GM23248 (cell line): ENCODE measurements at regions of chr1 and their contacts with region 1.

Region 1: DNA sequence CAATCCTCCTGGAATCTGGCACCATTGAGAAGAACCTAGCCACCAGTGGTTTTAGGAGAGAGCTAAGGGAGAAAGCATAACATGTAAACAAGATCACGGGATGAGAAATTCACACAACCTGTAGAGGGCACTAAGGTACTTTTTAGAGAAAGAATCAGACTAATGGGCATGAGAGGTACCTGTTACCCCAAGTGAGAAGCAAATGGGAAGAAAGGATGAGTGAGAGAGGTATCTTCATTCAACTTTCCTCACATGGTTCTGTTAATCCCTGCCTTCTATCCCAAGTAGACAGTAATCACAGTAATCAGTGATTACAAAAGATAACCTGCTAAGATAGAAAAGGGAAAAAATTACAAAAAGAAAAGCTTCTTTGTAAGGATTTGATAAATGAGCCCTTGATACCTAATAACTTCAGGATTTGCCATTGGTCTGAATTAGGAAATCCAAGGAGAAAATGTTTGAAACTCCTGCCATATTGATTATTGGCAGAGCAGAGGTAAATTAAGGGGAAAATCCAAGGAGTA is 251.1 kb upstream of the ADGRL2 start:
- DNase-seq: peak; percentile 67
- H3K4me3 ChIP-seq: no peak overlapping the region
- H3K27ac ChIP-seq: no peak overlapping the region
- H3K4me1 ChIP-seq: no peaks in the 10 kb centered on the region
- H3K27me3 ChIP-seq: no peaks in the 10 kb centered on the region

Region 2: DNA sequence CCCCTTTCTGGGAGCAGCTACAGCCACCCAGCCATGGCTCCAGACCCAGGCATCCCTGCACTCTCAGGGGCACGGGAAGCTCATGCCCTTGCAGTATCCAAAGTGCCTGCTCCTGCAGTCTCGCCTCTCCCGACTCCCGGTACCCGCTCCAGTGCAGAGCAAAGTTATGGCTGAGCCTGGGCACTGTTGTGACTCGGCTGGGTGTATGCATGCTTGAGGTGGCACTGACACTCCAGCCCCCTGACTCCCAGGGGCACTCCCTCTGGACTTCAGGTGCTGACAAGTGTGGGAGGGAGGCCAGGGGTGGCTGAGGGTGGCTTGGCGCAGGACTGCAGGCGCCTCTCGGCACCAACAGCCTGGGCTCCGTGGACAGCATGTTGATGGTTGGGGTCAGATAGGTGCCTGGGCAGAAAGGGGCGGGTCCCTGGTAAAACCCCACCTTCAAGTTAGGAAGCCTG is 329.0 kb before region 1 on chr1:
- in situ Hi-C with region 1: no loop called
- DNase-seq: no peak
- H3K4me3 ChIP-seq: no peak overlapping the region
- H3K27ac ChIP-seq: no peak overlapping the region
- H3K4me1 ChIP-seq: no peaks in the 10 kb centered on the region
- H3K27me3 ChIP-seq: no peaks in the 10 kb centered on the region

Region 3: DNA sequence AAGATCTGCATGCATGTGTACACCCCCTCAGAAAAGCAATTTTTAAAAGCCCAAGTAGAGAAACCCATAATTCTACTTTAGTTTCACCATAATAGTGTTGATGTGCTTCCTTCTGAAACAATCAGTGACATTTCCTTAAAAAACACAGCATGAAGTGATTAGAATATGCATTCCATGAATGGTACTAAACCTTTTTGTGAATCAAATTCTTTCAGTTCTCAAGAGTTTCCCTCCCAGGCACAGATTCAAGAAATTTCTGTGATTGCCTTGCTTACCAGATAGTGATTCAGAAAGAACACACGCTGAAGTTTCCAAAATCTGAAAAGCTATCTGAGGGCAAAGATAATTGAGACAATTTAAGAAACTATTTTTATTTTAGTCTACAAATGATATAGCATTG is 114.7 kb after region 1 on chr1:
- in situ Hi-C with region 1: no loop called
- DNase-seq: peak; percentile 82
- H3K4me3 ChIP-seq: no peak overlapping the region
- H3K27ac ChIP-seq: peak overlapping the region; percentile 34
- H3K4me1 ChIP-seq: peaks cover 46% of the 10 kb centered on the region
- H3K27me3 ChIP-seq: no peaks in the 10 kb centered on the region

Region 4: GRCh38 chr1:81756872-81757271 is 207.2 kb after region 1 on chr1:
- in situ Hi-C with region 1: loop called (anchors 10 kb)
- DNase-seq: no peak
- H3K4me3 ChIP-seq: no peak overlapping the region
- H3K27ac ChIP-seq: no peak overlapping the region
- H3K4me1 ChIP-seq: peaks cover 18% of the 10 kb centered on the region
- H3K27me3 ChIP-seq: no peaks in the 10 kb centered on the region